Natural killer cell (primary cell): ENCODE measurements at regions of chr7 and their contacts with region 1.

Region 1: GRCh38 chr7:2980401-2981102 is 63.1 kb downstream of the CARD11 start:
- DNase-seq: peak; percentile 32 to 60
- ATAC-seq: peak; percentile 61 to 70 (median 63)
- H3K4me3 ChIP-seq: peak overlapping the region; percentile 48
- H3K4me3 Mint-ChIP-seq: peak overlapping the region; percentile 96
- H3K27ac ChIP-seq: peak overlapping the region; percentile 80
- H3K27ac Mint-ChIP-seq: peak overlapping the region; percentile 91 to 93
- H3K4me1 ChIP-seq: peaks cover 83% of the 10 kb centered on the region
- H3K4me1 Mint-ChIP-seq: peaks cover 81 to 89% of the 10 kb centered on the region in 2 donors
- H3K27me3 ChIP-seq: no peaks in the 10 kb centered on the region
- H3K27me3 Mint-ChIP-seq: no peaks in the 10 kb centered on the region
- CTCF ChIP-seq: no peak

Region 2: GRCh38 chr7:1297017-1297960 is 1683.3 kb before region 1 on chr7:
- intact Hi-C with region 1: no loop called
- DNase-seq: no peak
- ATAC-seq: no peak
- H3K4me3 ChIP-seq: no peak overlapping the region
- H3K4me3 Mint-ChIP-seq: peak overlapping the region; percentile 67
- H3K27ac ChIP-seq: no peak overlapping the region
- H3K27ac Mint-ChIP-seq: no peak overlapping the region
- H3K4me1 ChIP-seq: peaks cover 33% of the 10 kb centered on the region
- H3K4me1 Mint-ChIP-seq: peaks cover 0 to 20% of the 10 kb centered on the region in 2 donors
- H3K27me3 ChIP-seq: peaks cover 3% of the 10 kb centered on the region
- H3K27me3 Mint-ChIP-seq: peaks cover 0 to 1% of the 10 kb centered on the region in 2 donors
- CTCF ChIP-seq: no peak

Region 3: GRCh38 chr7:2903682-2904162 is 76.8 kb before region 1 on chr7:
- intact Hi-C with region 1: loop called (anchors 2 kb)
- DNase-seq: peak in 1 of 2 donors; percentile 22
- ATAC-seq: peak; percentile 25 to 38 (median 27)
- H3K4me3 ChIP-seq: no peak overlapping the region
- H3K4me3 Mint-ChIP-seq: peak overlapping the region; percentile 47
- H3K27ac ChIP-seq: peak overlapping the region; percentile 59
- H3K27ac Mint-ChIP-seq: peak overlapping the region; percentile 83 to 88
- H3K4me1 ChIP-seq: peaks cover 37% of the 10 kb centered on the region
- H3K4me1 Mint-ChIP-seq: peaks cover 35 to 52% of the 10 kb centered on the region in 2 donors
- H3K27me3 ChIP-seq: no peaks in the 10 kb centered on the region
- H3K27me3 Mint-ChIP-seq: no peaks in the 10 kb centered on the region
- CTCF ChIP-seq: no peak

Region 4: GRCh38 chr7:2956526-2957368 is 23.8 kb before region 1 on chr7:
- intact Hi-C with region 1: loop called (anchors 2 kb)
- DNase-seq: peak; percentile 27 to 40
- ATAC-seq: peak; percentile 55 to 69 (median 60)
- H3K4me3 ChIP-seq: no peak overlapping the region
- H3K4me3 Mint-ChIP-seq: peak overlapping the region; percentile 25
- H3K27ac ChIP-seq: peak overlapping the region; percentile 15
- H3K27ac Mint-ChIP-seq: peak overlapping the region; percentile 85 to 91
- H3K4me1 ChIP-seq: peaks cover 72% of the 10 kb centered on the region
- H3K4me1 Mint-ChIP-seq: peaks cover 61 to 63% of the 10 kb centered on the region in 2 donors
- H3K27me3 ChIP-seq: no peaks in the 10 kb centered on the region
- H3K27me3 Mint-ChIP-seq: no peaks in the 10 kb centered on the region
- CTCF ChIP-seq: no peak

Region 5: GRCh38 chr7:3065724-3066143 is 85.2 kb after region 1 on chr7:
- intact Hi-C with region 1: loop called (anchors 2 kb)
- DNase-seq: peak; percentile 47 to 84
- ATAC-seq: peak in 2 of 3 donors; percentile 1 to 7
- H3K4me3 ChIP-seq: no peak overlapping the region
- H3K4me3 Mint-ChIP-seq: peak overlapping the region; percentile 85
- H3K27ac ChIP-seq: peak overlapping the region; percentile 78
- H3K27ac Mint-ChIP-seq: peak overlapping the region; percentile 89 to 93
- H3K4me1 ChIP-seq: peaks cover 85% of the 10 kb centered on the region
- H3K4me1 Mint-ChIP-seq: peaks cover 78 to 82% of the 10 kb centered on the region in 2 donors
- H3K27me3 ChIP-seq: no peaks in the 10 kb centered on the region
- H3K27me3 Mint-ChIP-seq: no peaks in the 10 kb centered on the region
- CTCF ChIP-seq: peak; percentile 59

Region 6: DNA sequence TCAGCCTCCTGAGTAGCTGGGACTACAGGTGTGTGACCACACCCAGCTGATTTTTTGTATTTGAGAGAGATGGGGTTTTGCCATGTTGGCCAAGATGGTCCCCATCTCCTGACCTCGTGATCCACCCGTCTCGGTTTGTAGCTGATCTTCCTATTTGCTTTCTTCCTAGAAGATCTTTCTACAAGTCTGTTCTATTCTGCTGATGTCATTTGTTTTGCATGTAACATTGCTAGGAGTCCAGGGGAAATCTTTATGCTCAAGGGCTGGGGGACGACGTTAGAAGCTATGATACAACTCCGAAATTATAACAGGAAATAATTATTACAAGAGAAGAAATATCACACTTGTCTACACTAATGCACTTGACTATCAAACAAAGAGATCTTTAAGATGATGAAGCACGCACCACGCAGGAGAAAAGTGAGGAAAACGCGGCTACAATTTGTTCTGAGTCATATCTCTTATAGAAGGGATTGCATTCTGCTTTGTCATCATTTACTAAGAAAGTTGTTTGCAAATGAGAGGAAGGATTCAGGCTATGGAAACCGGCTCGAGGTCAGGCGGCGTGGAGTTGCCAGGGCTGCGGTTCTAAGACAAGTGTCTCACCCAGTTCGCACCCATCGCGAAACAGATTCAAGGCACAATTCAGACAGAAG is 166.1 kb after region 1 on chr7:
- intact Hi-C with region 1: loop called (anchors 5 kb)
- DNase-seq: peak in 1 of 2 donors; percentile 37
- ATAC-seq: peak; percentile 67 to 86 (median 86)
- H3K4me3 ChIP-seq: no peak overlapping the region
- H3K4me3 Mint-ChIP-seq: peak overlapping the region; percentile 73
- H3K27ac ChIP-seq: no peak overlapping the region
- H3K27ac Mint-ChIP-seq: peak overlapping the region; percentile 65 to 68
- H3K4me1 ChIP-seq: peaks cover 26% of the 10 kb centered on the region
- H3K4me1 Mint-ChIP-seq: peaks cover 23 to 24% of the 10 kb centered on the region in 2 donors
- H3K27me3 ChIP-seq: no peaks in the 10 kb centered on the region
- H3K27me3 Mint-ChIP-seq: no peaks in the 10 kb centered on the region
- CTCF ChIP-seq: no peak